Body of pancreas (tissue), 4 donors: ENCODE measurements at regions of chr2 and their contacts with region 1.

Region 1: GRCh38 chr2:69714024-69714423 is 27.9 kb upstream of the ANXA4 start:
- DNase-seq: no peak
- ATAC-seq: no peak
- H3K4me3 ChIP-seq: no peak overlapping the region
- H3K27ac ChIP-seq: no peak overlapping the region
- H3K4me1 ChIP-seq: peaks cover 6% of the 10 kb centered on the region
- H3K27me3 ChIP-seq: no peaks in the 10 kb centered on the region
- CTCF ChIP-seq: no peak
- POLR2A ChIP-seq: no peak

Region 2: DNA sequence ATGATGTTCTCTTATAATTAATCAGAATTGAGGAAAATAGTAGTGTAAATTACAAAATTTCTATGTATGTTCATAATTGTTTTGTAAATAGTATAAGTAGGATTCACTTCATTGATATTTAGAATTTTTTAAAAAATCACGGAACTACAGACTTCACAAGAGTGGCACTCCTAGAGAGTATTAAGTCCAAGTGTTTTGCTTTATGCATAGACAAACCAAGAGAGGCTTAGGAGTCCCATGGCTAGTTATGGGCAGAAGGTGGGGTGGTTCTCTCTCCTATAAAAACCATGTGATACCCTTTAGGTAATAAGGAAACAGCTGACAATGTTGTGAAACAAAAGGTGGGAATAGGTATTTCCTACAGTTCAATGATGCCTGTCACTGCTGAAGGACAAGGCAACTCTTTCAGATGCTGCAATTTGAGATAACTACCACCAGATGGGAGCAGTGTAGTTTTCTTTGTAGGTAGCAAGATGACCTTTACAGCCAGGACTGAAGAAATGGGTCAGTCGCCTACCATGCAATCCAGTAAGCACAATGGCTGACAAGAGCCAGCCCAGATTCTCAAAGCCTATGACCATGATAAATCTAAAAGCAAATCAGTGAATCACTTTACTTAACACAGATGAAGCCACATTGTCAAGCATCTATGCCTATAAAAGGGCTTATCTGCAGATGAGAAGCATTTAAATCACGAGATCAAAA is 154.4 kb before region 1 on chr2:
- intact Hi-C with region 1: loop called (anchors 5 kb)
- DNase-seq: peak in 3 of 4 donors; percentile 24 to 64 (median 45)
- ATAC-seq: peak; percentile 74
- H3K4me3 ChIP-seq: no peak overlapping the region
- H3K27ac ChIP-seq: no peak overlapping the region
- H3K4me1 ChIP-seq: peaks cover 16% of the 10 kb centered on the region
- H3K27me3 ChIP-seq: no peaks in the 10 kb centered on the region
- CTCF ChIP-seq: peak; percentile 32 to 84 (median 78)
- POLR2A ChIP-seq: no peak

Region 3: DNA sequence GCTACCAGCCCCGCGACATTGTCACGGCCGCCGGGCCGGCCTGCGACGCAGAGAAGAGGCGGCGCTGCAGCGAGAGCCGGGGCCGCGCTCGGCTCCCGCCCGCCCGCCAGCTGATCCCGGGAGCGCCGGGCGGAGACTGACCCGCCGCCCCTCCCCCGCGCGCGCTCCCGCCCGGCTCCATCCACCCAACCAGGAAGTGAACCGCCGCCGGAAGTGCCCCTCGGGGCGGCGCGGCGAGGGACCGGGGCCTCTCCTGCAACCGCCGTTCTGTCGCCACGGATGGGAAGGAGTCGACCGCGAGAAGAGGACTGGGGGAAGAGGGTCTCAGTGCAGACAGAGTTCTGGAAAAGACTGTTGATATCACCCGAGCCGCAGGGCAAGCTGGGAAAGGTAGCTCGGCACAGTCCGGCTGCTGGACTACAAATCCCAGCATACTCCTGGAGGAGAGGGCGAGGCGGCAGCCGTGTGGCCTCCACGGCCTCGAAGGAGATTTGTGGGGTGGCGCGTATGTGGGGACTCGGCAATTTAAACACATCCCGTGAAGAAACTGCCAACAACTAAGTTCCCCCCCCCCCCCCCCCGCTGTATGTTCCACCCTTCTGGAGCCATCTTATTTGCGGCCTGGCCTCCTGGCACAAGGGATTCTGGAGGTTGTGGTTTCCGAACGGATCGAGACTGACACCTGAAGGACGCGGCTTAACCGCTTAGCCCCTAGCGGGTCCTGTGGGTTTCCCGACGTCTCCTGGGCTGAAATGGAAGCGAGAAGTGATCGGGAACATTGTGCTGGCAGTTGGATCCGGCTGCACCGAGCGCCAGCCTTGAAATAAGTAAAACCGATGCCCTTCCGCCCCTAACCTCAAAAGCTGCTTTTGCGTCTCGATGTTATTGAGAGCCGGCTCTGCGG is 70.2 kb before region 1 on chr2 and contains the start of gene AAK1:
- intact Hi-C with region 1: loop called (anchors 5 kb)
- DNase-seq: peak; percentile 87 to 91 (median 90)
- ATAC-seq: peak; percentile 92
- H3K4me3 ChIP-seq: peak within 1 kb of the TSS; percentile 74 to 84
- H3K27ac ChIP-seq: peak within 1 kb of the TSS; percentile 91 to 98 (median 96)
- H3K4me1 ChIP-seq: peaks cover 42% of the 10 kb centered on the region
- H3K27me3 ChIP-seq: no peaks in the 10 kb centered on the region
- CTCF ChIP-seq: peak in 1 of 7 experiments; percentile 5
- POLR2A ChIP-seq: peak; percentile 77 to 87 (median 81)
- total RNA-seq, gene AAK1: 44.6 to 60.0 TPM